Upper lobe of right lung (tissue), 1 donor: ENCODE measurements at regions of chr17 and their contacts with region 1.

Region 1: GRCh38 chr17:29931231-29931932 is 1.4 kb upstream of the SSH2 start:
- DNase-seq: peak; percentile 68
- ATAC-seq: peak; percentile 80
- H3K4me3 ChIP-seq: peak overlapping the region; percentile 83
- H3K27ac ChIP-seq: peak overlapping the region; percentile 82
- H3K4me1 ChIP-seq: peaks cover 23% of the 10 kb centered on the region
- H3K27me3 ChIP-seq: no peaks in the 10 kb centered on the region
- CTCF ChIP-seq: peak; percentile 91

Region 2: DNA sequence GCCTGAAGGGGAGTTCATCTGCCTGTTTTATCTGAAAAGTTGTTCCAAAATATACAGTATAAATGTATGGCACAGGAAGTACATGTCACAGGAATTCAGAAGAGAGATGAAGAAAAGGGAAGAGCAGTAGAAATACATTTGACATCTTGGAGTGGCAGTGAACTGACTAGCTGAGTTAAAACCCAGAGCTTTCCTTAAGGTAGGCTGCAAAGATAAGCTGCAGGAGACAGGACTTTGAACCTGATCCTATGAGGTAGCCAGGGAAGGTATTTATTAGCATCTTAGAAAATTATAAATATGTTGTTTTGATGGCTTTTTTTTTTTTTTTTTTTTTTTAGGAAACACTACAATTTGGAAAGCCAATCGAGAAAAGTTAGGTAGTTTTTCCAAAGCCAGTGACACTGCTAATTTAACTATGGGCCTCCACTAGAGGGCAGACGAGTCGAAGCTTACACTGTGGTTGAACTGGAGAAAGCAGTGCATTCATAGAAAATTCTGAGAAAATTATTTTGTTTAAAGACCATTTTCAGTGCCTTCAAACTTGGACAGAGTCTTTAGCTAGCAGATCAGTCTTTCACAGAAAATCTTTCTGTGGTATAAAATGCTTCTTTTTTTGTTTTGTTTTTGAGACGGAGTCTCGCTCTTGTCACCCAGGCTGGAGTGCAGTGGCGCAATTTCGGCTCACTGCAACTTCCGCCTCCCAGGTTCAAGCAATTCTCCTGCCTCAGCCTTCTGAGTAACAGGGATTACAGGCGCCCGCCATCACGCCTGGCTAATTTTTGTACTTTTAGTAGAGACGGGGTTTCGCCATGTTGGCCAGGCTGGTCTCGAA is 123.6 kb before region 1 on chr17:
- intact Hi-C with region 1: loop called (anchors 5 kb)
- DNase-seq: peak; percentile 78
- ATAC-seq: peak; percentile 91
- H3K4me3 ChIP-seq: peak overlapping the region; percentile 32
- H3K27ac ChIP-seq: peak overlapping the region; percentile 53
- H3K4me1 ChIP-seq: no peaks in the 10 kb centered on the region
- H3K27me3 ChIP-seq: no peaks in the 10 kb centered on the region
- CTCF ChIP-seq: peak; percentile 81